H1 (cell line): ENCODE measurements at regions of chr6 and their contacts with region 1.

Region 1: DNA sequence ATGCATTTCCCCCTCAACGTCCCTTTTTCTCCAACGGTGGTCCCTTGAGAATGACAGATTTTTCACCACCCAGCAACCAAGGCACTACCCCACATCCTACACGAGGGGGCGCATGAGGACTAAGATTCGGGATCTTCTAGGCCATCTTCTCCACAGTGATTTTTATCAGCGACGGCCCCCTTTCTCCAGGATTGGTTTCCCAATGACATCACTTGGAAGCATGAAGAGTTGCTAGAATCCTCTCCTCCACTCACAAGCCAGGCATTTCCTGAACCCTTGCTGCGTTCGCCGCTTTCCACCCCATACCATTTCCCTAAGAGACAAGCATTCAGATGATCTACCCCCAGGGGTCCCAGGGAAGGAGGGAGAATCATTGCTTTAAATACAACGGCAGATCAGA is 252.0 kb downstream of the HIVEP2 start:
- DNase-seq: peak; percentile 25 to 87
- H3K4me3 ChIP-seq: peak overlapping the region in 1 of 4 experiments; percentile 17; a peak in 3 of 8 replicates
- H3K27ac ChIP-seq: no peak overlapping the region
- H3K4me1 ChIP-seq: peaks cover 0 to 3% (median under 1%) of the 10 kb centered on the region in 4 experiments; a peak in 3 of 7 replicates
- H3K27me3 ChIP-seq: no peaks in the 10 kb centered on the region
- CTCF ChIP-seq: peak; percentile 81 to 90 (median 86)
- EP300 ChIP-seq: no peak
- POLR2A ChIP-seq: no peak
- RAD21 ChIP-seq: peak; percentile 96

Region 2: DNA sequence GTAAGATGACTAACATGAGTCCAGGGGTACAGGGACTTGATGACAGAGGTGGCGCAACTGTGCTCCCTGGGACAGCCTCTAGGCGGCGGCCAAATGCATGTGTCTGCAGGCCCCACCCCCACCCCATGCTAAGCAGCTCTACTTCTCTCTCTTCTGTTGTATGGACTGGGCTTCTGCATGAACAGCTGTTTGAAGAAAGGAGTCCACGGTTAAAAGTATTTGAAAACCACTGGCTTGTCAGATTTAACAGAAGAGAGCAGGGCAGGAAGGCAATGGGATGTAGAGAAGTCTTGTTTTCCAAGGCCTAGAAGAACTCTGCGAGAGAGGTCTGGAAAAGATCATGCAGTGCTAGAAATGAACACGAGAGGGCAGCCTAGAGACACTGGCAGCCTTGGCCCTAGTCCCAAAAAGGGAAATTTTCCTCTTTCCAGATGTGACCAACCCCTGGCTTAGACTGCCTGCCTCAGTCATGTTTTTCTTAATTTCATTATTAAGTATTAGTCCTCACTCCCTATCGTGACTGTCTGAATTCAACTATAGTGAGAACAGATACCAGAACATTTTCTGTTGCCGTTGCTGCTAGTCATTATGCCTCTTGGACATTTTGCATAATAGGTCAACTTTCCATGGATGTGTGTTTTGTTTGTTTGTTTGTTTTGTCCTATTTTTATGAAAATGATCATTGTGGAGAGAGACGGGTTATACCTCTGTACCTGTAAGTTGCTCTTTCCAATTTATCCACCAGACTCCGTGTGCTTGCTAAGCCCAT is 126.1 kb before region 1 on chr6:
- CTCF ChIA-PET with region 1: interaction called, 20 read pairs
- POLR2A ChIA-PET with region 1: no interaction called
- DNase-seq: peak; percentile 39 to 92
- H3K4me3 ChIP-seq: no peak overlapping the region
- H3K27ac ChIP-seq: no peak overlapping the region
- H3K4me1 ChIP-seq: peaks cover 0 to 5% (median 2%) of the 10 kb centered on the region in 4 experiments; a peak in 5 of 7 replicates
- H3K27me3 ChIP-seq: no peaks in the 10 kb centered on the region
- CTCF ChIP-seq: peak; percentile 74 to 86 (median 75)
- EP300 ChIP-seq: no peak
- POLR2A ChIP-seq: no peak
- RAD21 ChIP-seq: peak; percentile 82 to 85

Region 3: DNA sequence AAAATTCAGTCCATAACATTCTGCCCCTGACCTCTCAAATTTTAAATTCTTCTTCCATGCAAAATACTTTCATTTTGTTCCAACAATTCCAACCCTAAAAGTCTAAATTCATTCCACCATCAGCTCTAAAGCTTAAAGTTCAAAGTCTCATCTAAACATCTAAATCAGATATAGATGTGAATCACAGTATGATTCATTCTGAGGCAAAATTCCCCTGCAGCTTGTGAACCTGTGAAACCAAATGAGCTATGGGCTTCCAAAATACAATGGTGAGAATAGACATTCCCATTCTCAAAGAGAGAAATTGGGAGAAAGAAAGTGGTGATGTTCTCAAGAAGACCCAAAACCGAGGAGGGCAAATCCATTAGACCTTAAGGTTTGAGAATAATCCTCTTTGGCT is 57.8 kb before region 1 on chr6:
- CTCF ChIA-PET with region 1: no interaction called
- POLR2A ChIA-PET with region 1: no interaction called
- DNase-seq: no peak
- H3K4me3 ChIP-seq: no peak overlapping the region
- H3K27ac ChIP-seq: no peak overlapping the region
- H3K4me1 ChIP-seq: no peaks in the 10 kb centered on the region
- H3K27me3 ChIP-seq: no peaks in the 10 kb centered on the region
- CTCF ChIP-seq: no peak
- EP300 ChIP-seq: no peak
- POLR2A ChIP-seq: no peak
- RAD21 ChIP-seq: no peak

Region 4: DNA sequence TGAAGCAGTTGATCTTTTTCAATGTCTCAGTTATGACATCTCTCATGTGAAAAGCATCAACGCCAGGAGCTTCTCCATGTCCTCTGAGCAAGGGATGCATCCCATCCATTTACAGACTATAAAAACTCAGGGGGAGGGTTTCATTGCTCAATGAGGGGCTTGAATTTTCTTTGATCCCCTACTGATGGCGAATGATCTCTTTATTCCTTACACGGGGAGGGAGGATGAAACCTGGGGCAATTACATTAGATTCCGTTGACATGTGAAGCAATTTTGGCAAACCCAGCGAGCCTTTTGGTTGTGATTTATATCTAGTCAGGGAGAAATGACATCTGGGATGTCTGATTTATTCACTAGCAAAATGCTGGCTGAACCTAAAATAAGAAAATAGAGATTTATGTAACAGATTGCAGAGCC is 16.9 kb before region 1 on chr6:
- CTCF ChIA-PET with region 1: interaction called, 16 read pairs
- POLR2A ChIA-PET with region 1: no interaction called
- DNase-seq: no peak
- H3K4me3 ChIP-seq: no peak overlapping the region
- H3K27ac ChIP-seq: no peak overlapping the region
- H3K4me1 ChIP-seq: no peaks in the 10 kb centered on the region; a peak in 1 of 7 replicates
- H3K27me3 ChIP-seq: no peaks in the 10 kb centered on the region
- CTCF ChIP-seq: no peak
- EP300 ChIP-seq: no peak
- POLR2A ChIP-seq: no peak
- RAD21 ChIP-seq: no peak

Region 5: GRCh38 chr6:142737368-142738034 is 44.6 kb after region 1 on chr6:
- CTCF ChIA-PET with region 1: interaction called, 17 read pairs
- POLR2A ChIA-PET with region 1: no interaction called
- DNase-seq: no peak
- H3K4me3 ChIP-seq: no peak overlapping the region
- H3K27ac ChIP-seq: no peak overlapping the region
- H3K4me1 ChIP-seq: peaks cover 0 to 3% (median 2%) of the 10 kb centered on the region in 4 experiments; a peak in 2 of 7 replicates
- H3K27me3 ChIP-seq: no peaks in the 10 kb centered on the region
- CTCF ChIP-seq: no peak
- EP300 ChIP-seq: no peak
- POLR2A ChIP-seq: no peak
- RAD21 ChIP-seq: no peak

Region 6: GRCh38 chr6:143026696-143027449 is 333.9 kb after region 1 on chr6:
- CTCF ChIA-PET with region 1: interaction called, 35 read pairs
- POLR2A ChIA-PET with region 1: no interaction called
- DNase-seq: peak; percentile 27 to 71
- H3K4me3 ChIP-seq: no peak overlapping the region
- H3K27ac ChIP-seq: no peak overlapping the region
- H3K4me1 ChIP-seq: no peaks in the 10 kb centered on the region
- H3K27me3 ChIP-seq: no peaks in the 10 kb centered on the region
- CTCF ChIP-seq: peak; percentile 74 to 85 (median 82)
- EP300 ChIP-seq: no peak
- POLR2A ChIP-seq: no peak
- RAD21 ChIP-seq: peak; percentile 88 to 91